ENCODE measurements at regions of chr22 and their contacts with region 1.

Region 1: DNA sequence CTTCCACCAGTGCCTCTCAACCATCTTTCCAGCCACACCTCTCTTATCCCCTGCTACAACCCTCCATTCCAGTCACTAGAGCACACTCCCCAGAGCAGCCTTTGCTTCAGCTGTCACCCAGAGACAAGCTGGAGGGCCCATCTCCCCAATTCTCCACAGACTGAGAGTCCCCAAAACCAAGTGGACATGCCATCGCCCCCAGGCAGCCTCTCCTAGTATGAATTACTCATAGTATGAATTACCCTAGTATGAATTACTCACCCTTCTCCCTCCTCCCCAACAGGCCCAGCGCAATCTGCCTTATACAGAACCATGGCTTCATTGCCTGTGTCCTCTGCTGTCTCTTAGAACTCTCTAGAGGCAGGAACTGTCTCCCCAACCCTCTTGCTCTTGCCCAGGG is 24.8 kb downstream of the MYH9 start:
- DNase-seq: no peak
- ATAC-seq: no peak

Region 2: DNA sequence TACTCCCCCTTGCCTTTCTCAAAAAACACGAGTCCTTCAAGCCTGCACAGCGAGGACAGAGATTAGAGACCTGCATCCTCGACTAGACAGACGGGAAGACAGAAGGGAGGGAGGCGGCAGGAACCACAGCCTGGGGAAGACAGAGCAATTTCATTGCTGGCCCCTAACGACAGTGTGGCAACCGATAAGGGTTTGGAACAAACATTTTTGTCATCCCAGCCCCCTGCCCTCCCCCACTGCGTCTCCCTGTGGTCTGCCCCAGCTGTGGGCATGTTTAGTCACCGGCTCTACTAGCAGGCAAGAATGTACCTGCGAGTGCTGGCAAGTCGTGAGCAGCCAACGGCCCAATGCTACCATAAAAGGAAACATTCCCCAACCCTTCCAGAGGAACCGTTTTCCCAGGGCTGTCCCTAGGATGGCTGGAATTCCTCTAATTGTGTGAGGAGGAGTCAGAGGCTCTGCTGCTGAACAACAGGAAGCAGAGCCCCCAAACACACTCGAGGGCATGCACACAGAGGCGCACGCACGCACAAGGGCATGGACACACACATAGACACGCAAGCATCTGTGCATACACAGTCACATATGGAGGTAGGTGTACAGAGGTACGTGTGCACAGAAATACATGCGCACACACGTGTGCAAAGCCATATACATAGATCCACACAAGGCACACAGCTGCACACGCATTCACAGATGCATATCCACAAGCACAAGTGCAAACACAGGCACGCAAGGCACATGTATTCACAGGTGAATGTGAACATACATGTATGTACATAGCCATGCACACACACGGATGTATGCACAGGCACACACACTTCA is 33.5 kb before region 1 on chr22:
- intact Hi-C with region 1: loop called (anchors 2 kb)
- DNase-seq: peak; percentile 81
- ATAC-seq: peak; percentile 11